Naive thymus-derived CD4-positive, alpha-beta T cell (primary cell): ENCODE measurements at regions of chr7 and their contacts with region 1.

Region 1: DNA sequence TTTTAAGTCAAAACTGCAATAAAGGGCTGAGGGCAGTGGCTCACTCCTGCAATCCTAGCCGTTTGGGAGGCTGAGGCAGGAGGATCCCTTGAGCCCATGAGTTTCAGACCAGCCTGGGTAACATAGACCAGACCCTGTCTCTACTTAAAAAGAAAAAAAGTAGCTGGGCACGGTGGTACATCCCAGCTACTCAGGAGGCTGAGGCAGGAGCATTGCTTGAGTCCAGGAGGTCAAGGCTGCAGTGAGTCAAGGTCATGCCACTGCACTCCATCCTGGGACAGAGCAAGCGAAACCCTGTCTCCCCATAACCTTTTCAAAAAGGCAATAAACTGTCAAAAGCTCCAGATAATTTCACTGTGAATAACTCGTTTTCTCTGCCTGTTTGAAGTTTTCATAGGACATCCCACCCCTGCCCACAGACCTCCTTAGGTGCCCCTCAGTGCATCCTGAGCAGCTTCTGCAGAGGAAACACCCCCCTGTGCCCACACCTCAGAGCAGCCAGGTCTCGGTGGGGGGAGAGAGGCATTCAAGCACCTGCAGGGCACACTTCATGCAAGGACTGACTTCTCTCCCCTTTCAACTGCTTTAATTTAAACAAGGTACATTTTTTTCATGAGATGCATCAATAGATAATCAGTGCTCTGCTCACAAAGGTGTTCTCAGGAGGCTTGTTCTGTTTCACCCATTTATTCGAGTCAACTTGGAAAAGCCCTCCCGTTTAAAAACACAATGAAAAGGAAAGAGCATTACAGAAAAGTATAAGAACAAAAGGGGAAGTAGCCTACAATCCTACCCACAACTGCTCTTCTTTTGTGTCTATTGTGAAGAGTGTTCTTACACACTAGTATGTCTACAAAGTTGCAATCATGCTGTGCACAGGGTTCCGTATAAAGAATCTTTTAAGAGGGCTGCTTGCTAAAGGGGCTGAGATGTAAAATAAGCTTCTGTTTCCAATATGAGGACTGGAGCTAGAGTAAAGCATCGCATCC is 104.9 kb downstream of the KMT2E start:
- DNase-seq: no peak
- ATAC-seq: no peak
- H3K4me3 ChIP-seq: no peak overlapping the region
- H3K4me3 Mint-ChIP-seq: peak overlapping the region in 4 of 10 donors; percentile 23 to 39 (median 34)
- H3K27ac ChIP-seq: peak overlapping the region; percentile 40
- H3K27ac Mint-ChIP-seq: peak overlapping the region; percentile 53 to 90 (median 86)
- H3K4me1 ChIP-seq: no peaks in the 10 kb centered on the region
- H3K4me1 Mint-ChIP-seq: peaks cover 5 to 51% (median 32%) of the 10 kb centered on the region in 7 donors
- H3K27me3 ChIP-seq: no peaks in the 10 kb centered on the region
- H3K27me3 Mint-ChIP-seq: no peaks in the 10 kb centered on the region

Region 2: DNA sequence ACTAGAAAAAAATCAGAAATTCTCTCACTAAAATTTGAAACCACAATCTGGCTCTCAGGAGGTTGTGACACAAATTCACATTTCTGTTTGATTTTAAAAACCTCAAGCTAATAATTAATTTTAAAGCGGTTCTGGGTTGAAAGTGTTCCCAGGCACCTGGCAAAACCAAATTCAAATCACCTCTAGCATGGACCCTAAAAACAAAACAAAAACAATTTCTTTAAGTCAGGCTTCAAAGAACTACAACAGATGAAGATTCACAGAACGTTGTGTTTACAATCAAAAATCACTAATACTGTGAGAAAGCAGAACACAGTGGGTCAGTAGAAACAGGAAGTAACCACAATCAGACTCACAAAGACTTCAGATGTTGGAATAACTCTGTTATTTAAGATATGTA is 1122.3 kb before region 1 on chr7:
- CTCF ChIA-PET with region 1: no interaction called
- POLR2A ChIA-PET with region 1: no interaction called
- intact Hi-C with region 1: no loop called
- DNase-seq: no peak
- ATAC-seq: no peak
- H3K4me3 ChIP-seq: no peak overlapping the region
- H3K4me3 Mint-ChIP-seq: no peak overlapping the region
- H3K27ac ChIP-seq: no peak overlapping the region
- H3K27ac Mint-ChIP-seq: no peak overlapping the region
- H3K4me1 ChIP-seq: no peaks in the 10 kb centered on the region
- H3K4me1 Mint-ChIP-seq: no peaks in the 10 kb centered on the region
- H3K27me3 ChIP-seq: peaks cover 0 to 2% of the 10 kb centered on the region in 2 donors
- H3K27me3 Mint-ChIP-seq: peaks cover 8 to 15% (median 12%) of the 10 kb centered on the region in 5 donors

Region 3: GRCh38 chr7:105079348-105079747 is 39.6 kb before region 1 on chr7:
- CTCF ChIA-PET with region 1: no interaction called
- POLR2A ChIA-PET with region 1: no interaction called
- intact Hi-C with region 1: loop called in 1 of 2 experiments (anchors 2 kb)
- DNase-seq: no peak
- ATAC-seq: peak; percentile 31
- H3K4me3 ChIP-seq: no peak overlapping the region
- H3K4me3 Mint-ChIP-seq: no peak overlapping the region
- H3K27ac ChIP-seq: no peak overlapping the region
- H3K27ac Mint-ChIP-seq: peak overlapping the region in 2 of 9 donors; percentile 25 to 40
- H3K4me1 ChIP-seq: no peaks in the 10 kb centered on the region
- H3K4me1 Mint-ChIP-seq: peaks cover 0 to 36% (median 10%) of the 10 kb centered on the region in 7 donors
- H3K27me3 ChIP-seq: no peaks in the 10 kb centered on the region
- H3K27me3 Mint-ChIP-seq: no peaks in the 10 kb centered on the region